Gastrocnemius medialis (tissue), 4 donors: ENCODE measurements at regions of chr2 and their contacts with region 1.

Region 1: GRCh38 chr2:27754138-27754588 is 17.4 kb upstream of the MRPL33 start:
- DNase-seq: peak; percentile 63 to 76
- ATAC-seq: peak; percentile 84 to 92
- H3K4me3 ChIP-seq: no peak overlapping the region
- H3K27ac ChIP-seq: no peak overlapping the region
- H3K4me1 ChIP-seq: peaks cover 7 to 9% of the 10 kb centered on the region in 2 donors
- H3K27me3 ChIP-seq: no peaks in the 10 kb centered on the region
- CTCF ChIP-seq: peak; percentile 82 to 91 (median 86)
- POLR2A ChIP-seq: no peak

Region 2: DNA sequence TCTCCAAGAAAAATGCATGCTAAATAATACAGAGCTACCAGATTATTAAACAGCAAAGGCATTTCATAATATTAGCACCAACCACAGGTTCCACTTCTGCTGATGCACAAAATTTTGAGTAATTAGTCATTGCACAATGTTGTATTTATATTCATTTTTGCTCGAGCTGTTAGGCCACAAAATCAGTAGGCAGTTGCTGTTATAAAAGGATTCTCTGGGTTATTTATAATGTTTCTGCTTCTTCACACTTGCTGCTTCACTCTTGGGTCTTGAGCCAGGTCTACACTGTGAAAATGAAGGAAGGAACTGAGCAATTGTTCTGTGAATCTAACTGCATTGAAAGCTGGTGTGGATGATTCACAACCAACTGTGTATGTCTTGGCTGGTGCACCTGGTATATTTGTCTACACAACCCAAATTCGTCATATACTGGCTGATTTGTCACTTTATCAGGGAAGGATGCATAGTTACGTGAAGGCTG is 55.6 kb after region 1 on chr2:
- in situ Hi-C with region 1: no loop called
- intact Hi-C with region 1: no loop called
- DNase-seq: no peak
- ATAC-seq: no peak
- H3K4me3 ChIP-seq: no peak overlapping the region
- H3K27ac ChIP-seq: peak overlapping the region in 1 of 4 donors; percentile 50
- H3K4me1 ChIP-seq: peaks cover 0 to 23% of the 10 kb centered on the region in 2 donors
- H3K27me3 ChIP-seq: no peaks in the 10 kb centered on the region
- CTCF ChIP-seq: no peak
- POLR2A ChIP-seq: no peak

Region 3: DNA sequence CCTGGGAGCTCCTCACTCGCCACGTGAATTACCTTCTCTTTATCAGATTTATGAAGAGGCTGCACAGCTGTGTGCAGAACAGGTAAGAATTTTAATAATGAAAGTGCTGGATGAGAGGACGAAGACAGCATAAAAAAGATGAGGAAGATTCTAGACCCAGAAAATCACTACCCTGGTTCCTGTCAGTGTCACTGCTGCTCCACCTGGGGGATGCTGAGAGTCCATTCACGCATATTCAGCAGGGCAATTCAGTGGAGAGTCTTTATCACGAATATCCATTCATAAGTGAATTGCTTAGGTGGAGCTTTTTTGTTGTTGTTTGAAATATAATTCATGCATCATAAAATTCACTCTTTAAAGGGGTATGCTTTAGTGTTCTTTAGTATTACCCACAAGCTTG is 69.4 kb after region 1 on chr2:
- in situ Hi-C with region 1: no loop called
- intact Hi-C with region 1: loop called (anchors 1 kb)
- DNase-seq: peak; percentile 27 to 50
- ATAC-seq: peak; percentile 71 to 74
- H3K4me3 ChIP-seq: peak overlapping the region in 3 of 4 donors; percentile 3 to 43 (median 33)
- H3K27ac ChIP-seq: peak overlapping the region; percentile 75 to 82 (median 78)
- H3K4me1 ChIP-seq: peaks cover 12 to 30% of the 10 kb centered on the region in 2 donors
- H3K27me3 ChIP-seq: no peaks in the 10 kb centered on the region
- CTCF ChIP-seq: peak; percentile 46 to 64 (median 55)
- POLR2A ChIP-seq: no peak

Region 4: GRCh38 chr2:28452534-28453081 is 698.4 kb after region 1 on chr2:
- in situ Hi-C with region 1: loop called in 1 of 4 experiments (anchors 10 kb)
- intact Hi-C with region 1: loop called (anchors 2 kb)
- DNase-seq: peak; percentile 54 to 65
- ATAC-seq: peak; percentile 60 to 82
- H3K4me3 ChIP-seq: no peak overlapping the region
- H3K27ac ChIP-seq: no peak overlapping the region
- H3K4me1 ChIP-seq: no peaks in the 10 kb centered on the region
- H3K27me3 ChIP-seq: no peaks in the 10 kb centered on the region
- CTCF ChIP-seq: peak; percentile 92 to 97 (median 96)
- POLR2A ChIP-seq: no peak